Dorsolateral prefrontal cortex (tissue), 120 donors: ENCODE measurements at regions of chr13 and their contacts with region 1.

Region 1: GRCh38 chr13:113208424-113209335 is at the start of gene PCID2:
- DNase-seq: peak; percentile 75 to 95 (median 85)
- H3K4me3 ChIP-seq: peak within 1 kb of the TSS; percentile 68 to 100 (median 94)
- H3K27ac ChIP-seq: peak within 1 kb of the TSS; percentile 88 to 100 (median 98)
- H3K27me3 ChIP-seq: no peaks in the 10 kb centered on the region
- CTCF ChIP-seq: peak in 47 of 56 donors; percentile 7 to 63 (median 39)
- total RNA-seq, gene PCID2: 32.8 to 106 (median 48.0) TPM

Region 2: DNA sequence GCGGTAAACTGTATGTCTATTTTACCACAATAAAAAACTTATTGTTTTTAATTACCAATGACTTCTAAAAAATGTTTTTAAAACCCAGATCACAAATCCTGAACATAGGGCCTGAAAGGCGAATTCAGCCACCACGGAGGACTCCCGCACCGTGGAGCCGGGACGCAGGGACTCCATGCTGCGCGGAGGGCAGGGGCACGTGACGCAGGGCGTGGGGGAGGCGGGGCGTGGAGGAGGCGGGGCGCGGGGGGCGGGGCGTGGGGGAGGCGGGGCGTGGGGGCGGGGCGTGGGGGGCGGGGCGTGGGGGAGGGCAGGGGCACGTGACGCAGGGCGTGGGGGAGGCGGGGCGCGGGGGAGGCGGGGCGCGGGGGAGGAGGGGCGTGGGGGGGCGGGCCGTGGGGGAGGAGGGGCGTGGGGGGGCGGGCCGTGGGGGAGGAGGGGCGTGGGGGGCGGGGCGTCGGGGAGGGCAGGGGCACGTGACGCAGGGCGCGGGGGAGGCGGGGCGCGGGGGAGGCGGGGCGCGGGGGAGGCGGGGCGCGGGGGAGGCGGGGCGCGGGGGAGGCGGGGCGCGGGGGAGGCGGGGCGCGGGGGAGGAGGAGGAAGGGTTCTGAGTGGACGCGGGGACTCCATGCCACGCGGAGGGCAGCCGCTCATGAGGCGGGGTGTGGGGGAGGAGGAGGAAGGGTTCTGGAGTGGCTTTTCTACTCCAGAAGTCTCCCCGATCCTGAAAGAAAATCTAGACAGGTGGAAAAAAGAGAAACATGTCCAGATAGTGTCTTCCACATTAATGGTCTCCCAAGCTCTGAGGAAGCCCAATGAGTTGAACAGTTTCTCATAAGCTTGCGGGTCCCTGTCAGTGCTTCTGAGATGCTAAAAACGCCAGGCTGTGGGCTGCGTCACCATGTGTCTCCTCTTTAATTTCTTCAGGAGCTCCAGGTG is 54.6 kb before region 1 on chr13:
- intact Hi-C with region 1: loop called (anchors 2 kb)
- DNase-seq: peak; percentile 73 to 86 (median 82)
- H3K4me3 ChIP-seq: peak overlapping the region; percentile 24 to 74 (median 57)
- H3K27ac ChIP-seq: peak overlapping the region in 58 of 59 donors; percentile 6 to 90 (median 80)
- H3K27me3 ChIP-seq: no peaks in the 10 kb centered on the region
- CTCF ChIP-seq: peak in 7 of 56 donors; percentile 6 to 37 (median 13)

Region 3: DNA sequence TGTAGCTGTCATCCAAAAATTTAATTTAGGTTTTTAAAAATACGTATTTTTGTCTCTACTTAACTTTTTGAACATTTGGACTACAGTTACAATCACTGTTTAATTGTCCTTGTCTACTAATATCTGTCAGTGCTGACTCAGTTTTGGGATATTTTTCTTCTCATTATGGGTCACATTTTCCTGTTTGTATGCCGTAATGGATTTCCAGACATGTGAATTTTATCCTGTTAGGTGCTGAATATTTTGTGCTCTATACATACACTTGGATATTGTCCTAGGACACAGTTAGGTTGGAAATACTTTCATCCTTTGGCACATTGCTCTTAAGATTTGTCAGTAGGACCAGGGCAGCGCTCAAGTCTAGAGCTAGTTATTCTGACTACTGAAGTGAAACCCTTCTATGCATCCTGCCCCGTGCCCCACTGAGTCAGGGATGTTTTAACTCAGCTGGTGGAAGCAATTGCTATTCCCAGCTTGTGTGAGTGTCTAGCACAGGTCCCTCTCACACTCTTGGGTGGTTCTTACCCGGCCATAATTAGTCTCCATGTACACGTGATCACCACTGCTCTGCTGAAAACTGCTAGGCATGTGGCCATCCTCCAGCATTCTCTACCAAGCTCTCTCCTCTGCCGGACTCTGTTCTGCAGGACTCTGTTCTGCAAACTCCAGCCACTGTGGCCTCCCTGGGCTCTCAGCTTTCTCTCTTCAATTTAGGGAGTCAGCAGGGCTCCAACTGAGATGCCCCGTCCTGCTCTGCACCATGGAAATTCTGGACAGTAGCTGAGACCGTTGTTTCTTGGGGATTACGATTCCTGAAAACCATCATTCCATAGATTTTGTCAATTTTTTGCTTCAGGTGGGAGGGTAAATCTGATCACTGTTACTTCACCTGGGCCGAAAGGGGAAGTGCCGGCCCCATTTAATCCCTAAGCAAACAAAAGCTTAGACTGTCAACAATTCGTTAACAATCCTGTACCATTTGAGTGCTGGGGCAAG is 39.1 kb before region 1 on chr13:
- intact Hi-C with region 1: no loop called
- DNase-seq: peak in 1 of 10 donors; percentile 22
- H3K4me3 ChIP-seq: no peak overlapping the region
- H3K27ac ChIP-seq: no peak overlapping the region
- H3K27me3 ChIP-seq: no peaks in the 10 kb centered on the region
- CTCF ChIP-seq: no peak

Region 4: GRCh38 chr13:113490496-113491417 is 282.1 kb after region 1 on chr13 and contains the start of gene DCUN1D2:
- intact Hi-C with region 1: loop called (anchors 5 to 10 kb)
- DNase-seq: peak; percentile 82 to 97 (median 92)
- H3K4me3 ChIP-seq: peak within 1 kb of the TSS; percentile 68 to 100 (median 95)
- H3K27ac ChIP-seq: peak within 1 kb of the TSS; percentile 65 to 95 (median 88)
- H3K27me3 ChIP-seq: no peaks in the 10 kb centered on the region
- CTCF ChIP-seq: peak in 13 of 56 donors; percentile 3 to 44 (median 14)
- total RNA-seq, gene DCUN1D2: 27.6 to 95.6 (median 60.2) TPM